Activated naive CD4-positive, alpha-beta T cell treated with anti-CD3 and anti-CD28 coated beads for 36 hours (primary cell): ENCODE measurements at regions of chr4 and their contacts with region 1.

Region 1: DNA sequence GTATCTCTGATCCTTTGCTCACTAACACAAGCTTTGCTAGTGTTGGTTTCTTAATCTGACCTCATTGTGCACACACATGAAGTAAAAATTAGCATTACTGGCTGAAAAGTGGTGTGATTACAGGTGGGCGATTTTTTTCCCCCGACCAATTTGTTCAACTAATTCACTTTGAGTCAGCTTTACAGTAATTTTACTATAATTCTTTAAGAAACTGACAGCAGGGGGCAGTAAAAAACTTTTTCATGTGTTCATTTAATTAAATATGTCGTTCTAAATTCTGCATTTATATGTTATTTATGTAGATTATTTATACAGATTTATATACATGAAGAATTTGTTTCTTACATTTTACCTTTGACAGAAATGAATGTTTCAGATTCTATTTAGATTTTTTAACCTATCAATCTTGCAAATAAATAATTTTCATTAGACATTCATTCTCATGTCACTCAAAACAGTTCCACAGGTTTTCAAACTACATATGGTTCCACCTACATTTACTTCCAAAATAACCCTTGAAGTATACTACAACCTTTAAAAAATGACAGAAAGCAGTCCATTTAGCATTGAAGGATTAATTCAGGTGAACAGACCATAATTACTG is 17.5 kb downstream of the PALLD start:
- DNase-seq: no peak
- H3K4me3 Mint-ChIP-seq: no peak overlapping the region
- H3K27ac Mint-ChIP-seq: no peak overlapping the region
- H3K4me1 Mint-ChIP-seq: peaks cover 32% of the 10 kb centered on the region
- H3K27me3 Mint-ChIP-seq: no peaks in the 10 kb centered on the region

Region 2: DNA sequence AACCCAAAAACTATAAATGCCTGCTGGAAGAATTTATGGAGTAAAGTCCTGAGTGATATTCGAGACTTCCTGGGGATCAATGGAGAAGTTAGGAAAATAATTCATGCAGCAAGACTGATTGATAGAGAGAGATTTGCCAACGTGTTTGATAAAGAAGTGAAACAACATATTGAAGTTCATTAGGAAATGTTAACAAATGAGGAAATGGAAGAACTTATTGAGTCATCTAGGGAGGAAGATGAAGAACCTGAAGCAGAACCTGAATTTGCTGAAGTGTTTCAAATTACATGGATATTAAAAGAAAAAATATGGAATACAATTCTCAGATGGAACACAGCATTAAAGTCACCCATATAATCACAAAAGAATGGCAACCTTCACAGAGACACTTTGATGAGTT is 234.8 kb before region 1 on chr4:
- CTCF ChIA-PET with region 1: no interaction called
- intact Hi-C with region 1: no loop called
- DNase-seq: no peak
- H3K4me3 Mint-ChIP-seq: no peak overlapping the region
- H3K27ac Mint-ChIP-seq: no peak overlapping the region
- H3K4me1 Mint-ChIP-seq: no peaks in the 10 kb centered on the region
- H3K27me3 Mint-ChIP-seq: no peaks in the 10 kb centered on the region

Region 3: DNA sequence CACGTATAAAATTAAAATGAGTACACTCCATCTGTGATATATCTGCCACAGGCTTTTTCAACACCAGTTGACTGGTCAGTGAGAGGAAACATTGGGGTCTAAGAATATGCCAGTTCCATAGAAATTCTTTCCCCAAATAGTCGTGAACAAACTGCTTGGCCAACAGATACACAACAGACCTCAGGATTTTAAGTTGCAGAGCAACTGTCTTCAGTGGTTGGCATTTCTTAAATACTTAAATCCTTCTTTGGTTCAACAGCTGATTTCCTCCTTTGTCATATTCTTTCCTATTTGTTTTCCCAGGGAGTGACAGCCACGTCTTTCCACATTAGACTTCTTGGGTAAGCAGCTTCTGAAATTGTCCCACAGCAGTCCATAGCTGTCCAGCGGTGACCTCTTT is 188.8 kb before region 1 on chr4:
- CTCF ChIA-PET with region 1: no interaction called
- intact Hi-C with region 1: no loop called
- DNase-seq: no peak
- H3K4me3 Mint-ChIP-seq: no peak overlapping the region
- H3K27ac Mint-ChIP-seq: no peak overlapping the region
- H3K4me1 Mint-ChIP-seq: no peaks in the 10 kb centered on the region
- H3K27me3 Mint-ChIP-seq: no peaks in the 10 kb centered on the region

Region 4: DNA sequence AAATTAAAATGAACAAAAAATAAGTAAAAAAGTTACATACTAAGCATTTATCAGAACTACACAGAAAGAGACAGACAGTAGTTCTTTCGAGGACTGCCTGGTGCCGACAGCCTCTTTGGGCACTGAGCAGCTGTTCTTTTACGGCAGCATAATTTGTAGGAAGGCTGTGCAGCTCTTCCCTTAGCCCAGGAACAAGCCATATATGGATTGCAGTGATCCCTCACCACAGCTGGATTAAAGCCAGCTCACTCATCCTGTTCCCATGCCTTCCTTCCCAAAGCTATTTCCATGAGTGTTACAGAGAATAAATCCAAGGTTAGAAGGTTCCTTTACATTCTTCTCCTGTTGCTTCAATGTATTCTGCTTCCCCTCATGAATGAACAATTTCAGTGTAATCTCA is 105.7 kb before region 1 on chr4:
- CTCF ChIA-PET with region 1: no interaction called
- intact Hi-C with region 1: no loop called
- DNase-seq: no peak
- H3K4me3 Mint-ChIP-seq: no peak overlapping the region
- H3K27ac Mint-ChIP-seq: no peak overlapping the region
- H3K4me1 Mint-ChIP-seq: no peaks in the 10 kb centered on the region
- H3K27me3 Mint-ChIP-seq: no peaks in the 10 kb centered on the region

Region 5: DNA sequence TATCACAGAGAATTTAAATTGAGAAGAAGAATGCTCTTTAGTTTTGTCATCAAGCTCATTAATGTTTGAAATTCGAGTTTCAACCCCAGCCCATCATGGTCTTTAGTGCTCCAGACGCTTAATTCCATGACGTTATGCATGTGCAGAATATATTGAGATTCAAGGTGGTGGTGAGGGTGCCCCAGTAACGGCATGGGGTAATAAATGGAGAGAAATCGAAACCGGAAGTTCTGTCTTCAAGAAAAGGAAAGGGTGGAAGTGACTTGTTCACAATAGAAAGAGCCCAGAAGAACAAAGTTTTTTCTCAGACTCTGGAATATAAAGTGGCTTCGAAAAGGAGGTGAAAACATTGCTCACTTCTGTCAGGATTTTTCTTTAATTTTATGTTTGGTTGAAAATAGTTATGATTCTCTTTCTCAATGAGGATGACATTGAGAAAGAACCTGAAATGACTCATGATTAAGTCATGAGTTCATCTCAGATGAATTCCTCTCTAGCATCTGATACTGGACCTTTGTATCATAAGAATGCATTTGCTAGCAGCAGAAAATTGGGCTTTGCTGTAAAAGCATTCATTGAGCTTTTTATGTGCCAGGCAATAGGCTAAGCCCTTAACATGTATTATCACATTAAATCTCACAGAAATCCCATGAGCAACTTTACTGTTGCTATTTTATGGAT is 33.3 kb before region 1 on chr4:
- CTCF ChIA-PET with region 1: interaction called, 3 read pairs
- intact Hi-C with region 1: loop called (anchors 1 kb)
- DNase-seq: peak; percentile 51
- H3K4me3 Mint-ChIP-seq: peak overlapping the region; percentile 96
- H3K27ac Mint-ChIP-seq: peak overlapping the region; percentile 96
- H3K4me1 Mint-ChIP-seq: peaks cover 69% of the 10 kb centered on the region
- H3K27me3 Mint-ChIP-seq: no peaks in the 10 kb centered on the region

Region 6: GRCh38 chr4:168551945-168552695 is 37.8 kb after region 1 on chr4:
- CTCF ChIA-PET with region 1: no interaction called
- intact Hi-C with region 1: loop called (anchors 1 kb)
- DNase-seq: peak; percentile 18
- H3K4me3 Mint-ChIP-seq: no peak overlapping the region
- H3K27ac Mint-ChIP-seq: no peak overlapping the region
- H3K4me1 Mint-ChIP-seq: peaks cover 4% of the 10 kb centered on the region
- H3K27me3 Mint-ChIP-seq: no peaks in the 10 kb centered on the region

Region 7: GRCh38 chr4:168831919-168832762 is 317.8 kb after region 1 on chr4:
- CTCF ChIA-PET with region 1: no interaction called
- intact Hi-C with region 1: loop called (anchors 10 kb)
- DNase-seq: peak; percentile 70
- H3K4me3 Mint-ChIP-seq: peak overlapping the region; percentile 74
- H3K27ac Mint-ChIP-seq: no peak overlapping the region
- H3K4me1 Mint-ChIP-seq: peaks cover 11% of the 10 kb centered on the region
- H3K27me3 Mint-ChIP-seq: peaks cover 57% of the 10 kb centered on the region

Region 8: GRCh38 chr4:169410839-169411770 is 896.8 kb after region 1 on chr4:
- CTCF ChIA-PET with region 1: no interaction called
- intact Hi-C with region 1: loop called (anchors 10 kb)
- DNase-seq: peak; percentile 83
- H3K4me3 Mint-ChIP-seq: no peak overlapping the region
- H3K27ac Mint-ChIP-seq: peak overlapping the region; percentile 71
- H3K4me1 Mint-ChIP-seq: peaks cover 25% of the 10 kb centered on the region
- H3K27me3 Mint-ChIP-seq: no peaks in the 10 kb centered on the region